ENCODE measurements at regions of chr7 and their contacts with region 1.

Region 1: GRCh38 chr7:17940302-17940883 is at the start of gene SNX13:
- DNase-seq: peak; percentile 80 to 96 (median 86)
- ATAC-seq: peak; percentile 95
- H3K4me3 ChIP-seq: peak within 1 kb of the TSS; percentile 89
- H3K4me3 Mint-ChIP-seq: peak within 1 kb of the TSS; percentile 99
- H3K27ac ChIP-seq: peak within 1 kb of the TSS; percentile 93 to 97
- H3K27ac Mint-ChIP-seq: peak within 1 kb of the TSS; percentile 98
- H3K4me1 ChIP-seq: peaks cover 19% of the 10 kb centered on the region
- H3K4me1 Mint-ChIP-seq: peaks cover 58% of the 10 kb centered on the region
- H3K27me3 ChIP-seq: no peaks in the 10 kb centered on the region
- H3K27me3 Mint-ChIP-seq: no peaks in the 10 kb centered on the region
- CTCF ChIP-seq: peak; percentile 33
- total RNA-seq, gene SNX13: 24.0 to 25.8 TPM

Region 2: GRCh38 chr7:16420649-16421332 is 1519.6 kb before region 1 on chr7:
- CTCF ChIA-PET with region 1: no interaction called
- POLR2A ChIA-PET with region 1: no interaction called
- intact Hi-C with region 1: loop called in 1 of 2 experiments (anchors 5 kb)
- DNase-seq: peak; percentile 50 to 94 (median 78)
- ATAC-seq: peak; percentile 89
- H3K4me3 ChIP-seq: peak overlapping the region; percentile 67
- H3K4me3 Mint-ChIP-seq: peak overlapping the region; percentile 90
- H3K27ac ChIP-seq: peak overlapping the region; percentile 77 to 80
- H3K27ac Mint-ChIP-seq: peak overlapping the region; percentile 87
- H3K4me1 ChIP-seq: peaks cover 14% of the 10 kb centered on the region
- H3K4me1 Mint-ChIP-seq: peaks cover 23% of the 10 kb centered on the region
- H3K27me3 ChIP-seq: no peaks in the 10 kb centered on the region
- H3K27me3 Mint-ChIP-seq: no peaks in the 10 kb centered on the region
- CTCF ChIP-seq: peak; percentile 33

Region 3: DNA sequence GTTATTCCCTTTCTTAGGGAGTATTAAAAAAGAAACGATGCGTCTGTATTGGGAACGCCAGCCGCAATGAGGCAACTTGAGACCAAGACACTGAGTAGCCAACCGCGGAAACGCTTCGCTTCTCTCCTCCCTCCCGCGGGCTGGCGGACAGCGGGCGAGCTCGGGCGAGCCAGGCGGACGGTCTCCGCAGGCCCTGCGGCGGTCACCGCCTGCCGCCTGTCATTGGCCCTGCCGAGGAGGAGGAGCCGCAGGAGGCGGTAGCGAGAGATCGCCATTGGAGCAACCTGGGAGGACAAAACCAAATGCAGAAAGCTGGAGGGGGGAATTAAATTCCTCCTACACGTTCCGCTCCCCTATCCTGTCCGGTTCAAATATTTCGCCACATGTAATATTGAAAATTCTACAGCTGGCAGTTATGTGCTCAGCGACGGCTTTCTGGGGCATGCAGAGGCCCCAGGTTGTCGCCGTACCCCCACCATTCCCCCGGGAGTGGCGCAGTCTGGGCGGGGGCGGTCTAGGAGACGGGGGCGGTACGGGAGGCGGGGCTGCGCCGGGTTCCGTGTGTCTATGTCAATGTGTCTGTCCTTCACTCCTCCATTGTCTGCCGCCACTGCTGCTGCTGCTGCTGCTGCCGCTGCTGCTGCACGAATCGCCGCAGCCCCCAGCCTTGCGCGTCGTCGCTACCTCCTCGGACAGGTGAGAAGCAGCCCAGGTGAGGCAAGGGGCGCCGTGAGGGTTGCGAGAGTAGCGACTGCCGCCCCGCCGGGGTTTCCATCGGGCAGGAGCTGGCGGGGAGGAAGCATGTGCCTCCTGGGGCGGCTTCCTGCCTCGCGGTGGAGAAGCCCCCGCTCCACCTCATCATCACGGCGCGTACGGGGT is 1294.6 kb before region 1 on chr7 and contains the starts of genes ANKMY2 and BZW2:
- CTCF ChIA-PET with region 1: no interaction called
- POLR2A ChIA-PET with region 1: no interaction called
- intact Hi-C with region 1: loop called in 1 of 2 experiments (anchors 5 kb)
- DNase-seq: peak; percentile 85 to 98 (median 92)
- ATAC-seq: peak; percentile 85
- H3K4me3 ChIP-seq: peak within 1 kb of the TSS; percentile 89
- H3K4me3 Mint-ChIP-seq: peak within 1 kb of the TSS; percentile 99
- H3K27ac ChIP-seq: peak within 1 kb of the TSS; percentile 75 to 88
- H3K27ac Mint-ChIP-seq: peak within 1 kb of the TSS; percentile 90
- H3K4me1 ChIP-seq: peaks cover 28% of the 10 kb centered on the region
- H3K4me1 Mint-ChIP-seq: peaks cover 78% of the 10 kb centered on the region
- H3K27me3 ChIP-seq: no peaks in the 10 kb centered on the region
- H3K27me3 Mint-ChIP-seq: no peaks in the 10 kb centered on the region
- CTCF ChIP-seq: no peak
- total RNA-seq, gene ANKMY2: 3.3 to 5.1 TPM
- total RNA-seq, gene BZW2: 15.1 to 17.2 TPM

Region 4: DNA sequence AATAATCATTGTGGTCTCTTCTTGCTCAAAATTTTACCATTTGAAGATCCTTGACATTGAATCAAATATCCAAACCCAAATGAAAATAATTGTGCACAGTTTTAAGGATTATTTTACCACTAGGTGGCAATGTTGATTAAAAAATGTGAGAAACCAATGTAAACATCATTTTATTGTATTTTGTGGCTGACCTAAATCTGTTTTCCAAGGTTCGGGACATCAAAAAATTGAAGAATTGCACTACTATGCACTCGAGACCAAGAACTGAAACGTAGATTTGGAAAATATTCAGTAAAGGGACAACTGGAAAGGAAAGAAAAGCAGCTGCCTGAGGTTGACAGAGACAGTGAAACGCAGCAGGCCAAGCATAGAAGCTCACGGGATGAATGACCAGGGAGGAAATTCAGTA is 259.4 kb before region 1 on chr7:
- CTCF ChIA-PET with region 1: no interaction called
- POLR2A ChIA-PET with region 1: no interaction called
- intact Hi-C with region 1: no loop called
- DNase-seq: peak in 3 of 14 experiments; percentile 31 to 45 (median 37)
- ATAC-seq: no peak
- H3K4me3 ChIP-seq: no peak overlapping the region
- H3K4me3 Mint-ChIP-seq: no peak overlapping the region
- H3K27ac ChIP-seq: no peak overlapping the region
- H3K27ac Mint-ChIP-seq: no peak overlapping the region
- H3K4me1 ChIP-seq: no peaks in the 10 kb centered on the region
- H3K4me1 Mint-ChIP-seq: no peaks in the 10 kb centered on the region
- H3K27me3 ChIP-seq: no peaks in the 10 kb centered on the region
- H3K27me3 Mint-ChIP-seq: no peaks in the 10 kb centered on the region
- CTCF ChIP-seq: peak; percentile 72

Region 5: GRCh38 chr7:17849504-17849903 is 90.9 kb before region 1 on chr7:
- CTCF ChIA-PET with region 1: no interaction called
- POLR2A ChIA-PET with region 1: no interaction called
- intact Hi-C with region 1: loop called in 1 of 2 experiments (anchors 10 kb)
- DNase-seq: no peak
- ATAC-seq: no peak
- H3K4me3 ChIP-seq: no peak overlapping the region
- H3K4me3 Mint-ChIP-seq: no peak overlapping the region
- H3K27ac ChIP-seq: no peak overlapping the region
- H3K27ac Mint-ChIP-seq: no peak overlapping the region
- H3K4me1 ChIP-seq: no peaks in the 10 kb centered on the region
- H3K4me1 Mint-ChIP-seq: peaks cover 18% of the 10 kb centered on the region
- H3K27me3 ChIP-seq: no peaks in the 10 kb centered on the region
- H3K27me3 Mint-ChIP-seq: no peaks in the 10 kb centered on the region
- CTCF ChIP-seq: no peak

Region 6: GRCh38 chr7:19713676-19714075 is 1773.3 kb after region 1 on chr7:
- CTCF ChIA-PET with region 1: no interaction called
- POLR2A ChIA-PET with region 1: no interaction called
- intact Hi-C with region 1: loop called in 1 of 2 experiments (anchors 10 kb)
- DNase-seq: peak in 13 of 14 experiments; percentile 3 to 74 (median 29)
- ATAC-seq: no peak
- H3K4me3 ChIP-seq: no peak overlapping the region
- H3K4me3 Mint-ChIP-seq: no peak overlapping the region
- H3K27ac ChIP-seq: no peak overlapping the region
- H3K27ac Mint-ChIP-seq: no peak overlapping the region
- H3K4me1 ChIP-seq: peaks cover 7% of the 10 kb centered on the region
- H3K4me1 Mint-ChIP-seq: peaks cover 17% of the 10 kb centered on the region
- H3K27me3 ChIP-seq: no peaks in the 10 kb centered on the region
- H3K27me3 Mint-ChIP-seq: no peaks in the 10 kb centered on the region
- CTCF ChIP-seq: peak; percentile 44